Activated naive CD4-positive, alpha-beta T cell treated with anti-CD3 and anti-CD28 coated beads for 36 hours (primary cell): ENCODE measurements at regions of chr7 and their contacts with region 1.

Region 1: DNA sequence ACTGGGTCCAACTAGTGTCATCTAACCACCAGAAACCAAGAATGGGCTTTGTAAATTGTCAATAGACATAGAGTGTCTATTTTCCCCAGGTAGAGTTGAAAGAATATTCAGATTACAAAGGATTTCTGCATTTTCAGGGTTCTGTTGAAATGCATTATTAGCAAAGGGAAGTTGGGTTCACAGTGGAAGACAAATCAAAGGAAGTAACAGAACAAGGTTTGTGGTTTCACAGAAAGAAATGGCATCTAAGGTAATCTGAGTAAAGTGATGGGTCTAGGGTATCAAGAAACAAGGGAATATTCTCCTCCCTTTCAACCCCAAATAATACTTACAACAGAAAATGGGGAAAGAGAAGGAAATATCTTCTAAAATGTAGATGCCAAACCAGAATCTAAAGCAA is 25.8 kb downstream of the CEP41 start:
- DNase-seq: no peak
- H3K4me3 Mint-ChIP-seq: no peak overlapping the region
- H3K27ac Mint-ChIP-seq: no peak overlapping the region
- H3K4me1 Mint-ChIP-seq: peaks cover 72% of the 10 kb centered on the region
- H3K27me3 Mint-ChIP-seq: no peaks in the 10 kb centered on the region

Region 2: DNA sequence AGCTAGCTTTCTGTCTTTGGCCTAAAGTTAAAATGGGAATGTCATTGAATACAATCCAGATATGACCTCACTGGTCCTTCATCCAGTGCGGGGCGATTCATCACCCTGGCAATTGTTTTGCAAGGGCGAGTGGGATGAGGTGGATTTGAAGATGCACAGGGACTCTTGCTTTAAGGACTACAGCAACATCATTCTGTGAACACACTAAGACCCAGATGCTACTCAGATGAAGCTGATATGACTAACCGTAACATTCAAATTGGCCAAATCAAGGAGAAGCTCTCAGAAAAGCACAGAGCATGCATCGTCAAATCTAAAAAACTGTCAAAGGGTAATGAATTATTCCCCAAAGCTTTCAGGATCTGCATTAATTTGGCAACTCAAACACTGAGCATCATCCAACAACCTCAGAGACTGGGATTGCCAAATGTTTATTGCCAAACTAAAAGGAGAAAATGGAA is 21.9 kb before region 1 on chr7:
- CTCF ChIA-PET with region 1: no interaction called
- intact Hi-C with region 1: loop called (anchors 2 kb)
- DNase-seq: no peak
- H3K4me3 Mint-ChIP-seq: no peak overlapping the region
- H3K27ac Mint-ChIP-seq: no peak overlapping the region
- H3K4me1 Mint-ChIP-seq: peaks cover 20% of the 10 kb centered on the region
- H3K27me3 Mint-ChIP-seq: no peaks in the 10 kb centered on the region